Calu3 (cell line): ENCODE measurements at regions of chr2 and their contacts with region 1.

Region 1: GRCh38 chr2:169528271-169528701 is 18.8 kb downstream of the KLHL41 start:
- DNase-seq: peak; percentile 80
- H3K4me3 Mint-ChIP-seq: no peak overlapping the region
- H3K27ac Mint-ChIP-seq: no peak overlapping the region
- H3K4me1 Mint-ChIP-seq: no peaks in the 10 kb centered on the region
- H3K27me3 Mint-ChIP-seq: no peaks in the 10 kb centered on the region
- CTCF ChIP-seq: peak; percentile 80

Region 2: GRCh38 chr2:169363560-169364150 is 164.6 kb before region 1 on chr2:
- CTCF ChIA-PET with region 1: no interaction called
- intact Hi-C with region 1: no loop called
- DNase-seq: peak; percentile 38
- H3K4me3 Mint-ChIP-seq: peak overlapping the region; percentile 68
- H3K27ac Mint-ChIP-seq: no peak overlapping the region
- H3K4me1 Mint-ChIP-seq: peaks cover 35% of the 10 kb centered on the region
- H3K27me3 Mint-ChIP-seq: peaks cover 68% of the 10 kb centered on the region
- CTCF ChIP-seq: no peak

Region 3: DNA sequence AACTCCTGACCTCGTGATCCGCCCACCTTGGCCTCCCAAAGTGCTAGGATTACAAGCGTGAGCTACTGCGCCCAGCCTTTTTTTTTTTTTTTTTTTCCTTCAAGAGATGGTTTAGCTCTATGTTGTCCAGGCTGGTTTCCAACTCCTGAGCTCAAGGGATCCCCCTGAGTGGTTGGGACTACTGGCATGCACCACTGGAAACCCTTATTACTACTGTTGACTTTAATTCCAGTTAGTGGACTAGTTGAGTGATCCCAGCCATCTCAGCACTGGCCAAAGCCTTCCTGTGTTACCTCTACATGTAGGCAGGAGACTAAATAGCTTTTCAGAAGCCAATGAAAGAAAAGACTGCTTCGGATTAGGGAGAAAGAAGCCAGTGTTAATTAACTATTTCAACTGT is 262.3 kb after region 1 on chr2:
- CTCF ChIA-PET with region 1: no interaction called
- intact Hi-C with region 1: loop called (anchors 2 kb)
- DNase-seq: no peak
- H3K4me3 Mint-ChIP-seq: no peak overlapping the region
- H3K27ac Mint-ChIP-seq: no peak overlapping the region
- H3K4me1 Mint-ChIP-seq: no peaks in the 10 kb centered on the region
- H3K27me3 Mint-ChIP-seq: no peaks in the 10 kb centered on the region
- CTCF ChIP-seq: no peak

Region 4: GRCh38 chr2:169839954-169840746 is 311.9 kb after region 1 on chr2:
- CTCF ChIA-PET with region 1: no interaction called
- intact Hi-C with region 1: no loop called
- DNase-seq: no peak
- H3K4me3 Mint-ChIP-seq: no peak overlapping the region
- H3K27ac Mint-ChIP-seq: no peak overlapping the region
- H3K4me1 Mint-ChIP-seq: peaks cover 15% of the 10 kb centered on the region
- H3K27me3 Mint-ChIP-seq: no peaks in the 10 kb centered on the region
- CTCF ChIP-seq: no peak